ENCODE measurements at regions of chr1 and their contacts with region 1.

Region 1: DNA sequence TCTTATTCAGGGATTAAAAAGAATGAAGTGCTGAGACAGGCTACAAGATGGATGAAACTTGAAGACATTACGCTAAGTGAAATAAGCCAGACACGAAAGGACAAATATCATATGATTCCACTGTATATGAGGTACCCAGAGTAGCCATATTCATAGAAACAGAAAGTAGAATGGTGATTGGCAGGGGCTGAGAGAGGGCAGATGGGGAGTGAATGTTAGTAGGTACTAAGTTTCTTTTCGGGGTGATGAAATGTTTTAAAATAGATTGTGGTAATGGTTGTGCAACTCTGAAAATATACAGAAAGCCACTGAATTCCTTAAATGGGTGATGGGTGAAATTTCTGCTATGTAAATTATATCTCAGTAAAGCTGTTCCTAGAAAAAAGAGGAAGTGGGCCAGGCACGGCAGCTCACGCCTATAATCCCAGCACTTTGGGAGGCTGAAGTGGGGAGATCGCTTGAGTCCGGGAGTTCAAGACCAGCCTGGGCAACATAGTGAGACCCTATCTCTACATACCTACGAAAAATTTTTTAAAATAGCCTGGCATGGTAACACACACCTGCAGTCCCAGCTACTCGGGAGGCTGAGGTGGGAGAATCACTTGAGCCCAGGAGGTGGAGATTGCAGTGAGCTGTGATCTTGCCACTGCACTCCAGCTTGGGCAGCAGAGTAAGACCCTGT is 15.9 kb downstream of the SLC27A3 start:
- DNase-seq: peak; percentile 86
- ATAC-seq: peak; percentile 94
- H3K4me3 ChIP-seq: peak overlapping the region in 4 of 5 experiments; percentile 11 to 59 (median 44)
- H3K4me3 Mint-ChIP-seq: peak overlapping the region; percentile 59
- H3K27ac ChIP-seq: peak overlapping the region; percentile 91 to 92
- H3K27ac Mint-ChIP-seq: peak overlapping the region; percentile 95
- H3K4me1 ChIP-seq: peaks cover 28 to 34% of the 10 kb centered on the region in 2 donors
- H3K4me1 Mint-ChIP-seq: peaks cover 36% of the 10 kb centered on the region
- H3K27me3 ChIP-seq: no peaks in the 10 kb centered on the region
- H3K27me3 Mint-ChIP-seq: no peaks in the 10 kb centered on the region
- CTCF ChIP-seq: no peak

Region 2: DNA sequence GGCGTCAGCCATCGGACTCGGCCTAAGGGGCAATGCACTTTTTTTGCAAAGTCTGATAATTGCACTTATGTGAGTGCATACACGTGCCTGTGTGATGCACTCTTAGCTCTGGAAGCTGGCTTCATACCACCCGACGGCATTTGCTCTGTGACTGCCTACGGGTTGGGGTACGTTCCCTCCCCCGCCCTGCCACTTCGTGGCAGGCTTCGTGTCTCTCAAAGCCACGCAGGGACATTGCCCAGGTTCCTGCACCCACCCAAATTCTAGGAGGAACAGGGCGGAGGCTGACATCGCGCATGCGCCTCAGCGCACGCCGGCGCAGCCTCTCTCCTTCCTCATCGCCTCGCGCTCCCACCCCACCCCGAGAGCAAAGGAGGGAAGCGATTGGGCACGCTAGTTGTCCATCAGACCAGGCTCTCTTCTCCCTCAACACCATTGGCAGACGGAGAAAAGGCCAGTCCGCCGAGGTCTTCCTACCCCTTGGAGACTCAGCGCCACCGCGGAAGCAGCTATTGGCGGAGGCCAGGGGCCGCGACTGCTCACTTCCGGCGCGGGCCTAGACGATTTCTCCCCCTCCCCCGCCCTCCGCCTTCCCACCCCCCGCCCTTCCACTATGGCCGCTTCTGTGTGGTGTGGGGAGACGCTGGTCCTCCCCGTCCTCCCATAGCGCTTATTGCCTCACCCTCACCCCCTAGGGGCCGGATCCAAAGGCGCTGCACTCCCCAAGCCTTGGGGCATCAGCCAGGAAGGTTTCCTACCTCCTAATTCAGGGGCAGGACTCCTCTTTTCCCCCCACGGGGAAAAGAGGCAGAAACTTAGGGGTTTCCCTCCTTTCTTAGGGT is 63.4 kb before region 1 on chr1 and contains the start of gene INTS3:
- CTCF ChIA-PET with region 1: no interaction called
- POLR2A ChIA-PET with region 1: no interaction called
- intact Hi-C with region 1: loop called (anchors 5 kb)
- DNase-seq: peak; percentile 99
- ATAC-seq: peak; percentile 99
- H3K4me3 ChIP-seq: peak within 1 kb of the TSS; percentile 78 to 99 (median 91)
- H3K4me3 Mint-ChIP-seq: peak within 1 kb of the TSS; percentile 84
- H3K27ac ChIP-seq: peak within 1 kb of the TSS; percentile 97 to 98
- H3K27ac Mint-ChIP-seq: peak within 1 kb of the TSS; percentile 86
- H3K4me1 ChIP-seq: peaks cover 9 to 16% of the 10 kb centered on the region in 2 donors
- H3K4me1 Mint-ChIP-seq: peaks cover 36% of the 10 kb centered on the region
- H3K27me3 ChIP-seq: no peaks in the 10 kb centered on the region
- H3K27me3 Mint-ChIP-seq: no peaks in the 10 kb centered on the region
- CTCF ChIP-seq: no peak
- total RNA-seq, gene INTS3: 69.1 and 69.3 TPM in 2 replicates

Region 3: DNA sequence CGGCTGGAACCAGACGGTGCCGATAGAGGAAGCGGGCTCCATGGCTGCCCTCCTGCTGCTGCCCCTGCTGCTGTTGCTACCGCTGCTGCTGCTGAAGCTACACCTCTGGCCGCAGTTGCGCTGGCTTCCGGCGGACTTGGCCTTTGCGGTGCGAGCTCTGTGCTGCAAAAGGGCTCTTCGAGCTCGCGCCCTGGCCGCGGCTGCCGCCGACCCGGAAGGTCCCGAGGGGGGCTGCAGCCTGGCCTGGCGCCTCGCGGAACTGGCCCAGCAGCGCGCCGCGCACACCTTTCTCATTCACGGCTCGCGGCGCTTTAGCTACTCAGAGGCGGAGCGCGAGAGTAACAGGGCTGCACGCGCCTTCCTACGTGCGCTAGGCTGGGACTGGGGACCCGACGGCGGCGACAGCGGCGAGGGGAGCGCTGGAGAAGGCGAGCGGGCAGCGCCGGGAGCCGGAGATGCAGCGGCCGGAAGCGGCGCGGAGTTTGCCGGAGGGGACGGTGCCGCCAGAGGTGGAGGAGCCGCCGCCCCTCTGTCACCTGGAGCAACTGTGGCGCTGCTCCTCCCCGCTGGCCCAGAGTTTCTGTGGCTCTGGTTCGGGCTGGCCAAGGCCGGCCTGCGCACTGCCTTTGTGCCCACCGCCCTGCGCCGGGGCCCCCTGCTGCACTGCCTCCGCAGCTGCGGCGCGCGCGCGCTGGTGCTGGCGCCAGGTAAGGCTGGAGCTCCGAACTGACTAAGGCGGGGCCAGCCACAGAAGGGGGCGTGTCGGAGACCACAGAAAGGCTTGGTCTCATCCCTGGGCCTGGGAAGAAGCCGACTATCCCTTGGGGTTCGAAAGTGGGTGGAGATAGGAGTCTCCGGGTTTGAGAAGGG is 15.4 kb before region 1 on chr1:
- CTCF ChIA-PET with region 1: no interaction called
- POLR2A ChIA-PET with region 1: interaction called, 7 read pairs
- intact Hi-C with region 1: loop called (anchors 2 kb)
- DNase-seq: peak; percentile 77
- ATAC-seq: peak; percentile 68
- H3K4me3 ChIP-seq: peak overlapping the region; percentile 49 to 80 (median 71)
- H3K4me3 Mint-ChIP-seq: peak overlapping the region; percentile 91
- H3K27ac ChIP-seq: peak overlapping the region; percentile 34 to 48
- H3K27ac Mint-ChIP-seq: peak overlapping the region; percentile 84
- H3K4me1 ChIP-seq: peaks cover 22 to 35% of the 10 kb centered on the region in 2 donors
- H3K4me1 Mint-ChIP-seq: peaks cover 31% of the 10 kb centered on the region
- H3K27me3 ChIP-seq: no peaks in the 10 kb centered on the region
- H3K27me3 Mint-ChIP-seq: no peaks in the 10 kb centered on the region
- CTCF ChIP-seq: no peak

Region 4: DNA sequence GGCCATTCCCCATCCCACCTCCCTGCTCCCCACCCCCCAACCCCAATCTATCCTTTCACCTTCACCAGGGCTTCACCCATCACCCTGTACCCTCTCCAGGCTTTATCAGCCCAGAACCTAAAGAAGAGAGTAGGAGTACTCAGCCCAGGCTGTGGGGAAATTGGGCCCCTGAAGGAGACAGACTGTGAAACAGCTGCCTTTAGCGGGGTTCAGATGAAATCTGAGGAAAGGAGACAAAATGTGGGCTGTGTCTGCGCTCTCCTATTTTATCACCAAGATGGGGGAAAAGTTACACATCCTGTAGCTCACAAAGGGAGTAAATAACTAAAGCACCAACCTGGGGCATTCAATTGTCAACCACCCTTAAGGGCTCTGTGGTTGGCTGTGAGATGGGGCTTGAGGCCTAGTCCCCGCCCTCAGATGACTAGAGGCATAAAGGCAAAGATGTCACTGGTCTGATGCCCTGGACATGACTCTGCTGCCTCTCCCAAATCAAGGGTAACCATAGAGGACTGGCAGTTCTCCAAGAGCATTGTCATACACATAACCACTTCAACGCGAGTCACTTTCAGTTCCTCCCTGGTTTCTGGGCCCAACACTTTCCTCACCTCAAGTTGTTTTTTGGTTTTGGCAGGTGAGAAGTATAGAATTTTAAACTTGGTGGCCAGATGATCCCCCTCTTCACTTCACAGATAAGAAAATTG is 14.1 kb after region 1 on chr1:
- CTCF ChIA-PET with region 1: no interaction called
- POLR2A ChIA-PET with region 1: no interaction called
- intact Hi-C with region 1: loop called (anchors 2 kb)
- DNase-seq: peak; percentile 91
- ATAC-seq: peak; percentile 98
- H3K4me3 ChIP-seq: no peak overlapping the region
- H3K4me3 Mint-ChIP-seq: peak overlapping the region; percentile 21
- H3K27ac ChIP-seq: peak overlapping the region; percentile 82 to 88
- H3K27ac Mint-ChIP-seq: peak overlapping the region; percentile 81
- H3K4me1 ChIP-seq: peaks cover 22 to 33% of the 10 kb centered on the region in 2 donors
- H3K4me1 Mint-ChIP-seq: peaks cover 30% of the 10 kb centered on the region
- H3K27me3 ChIP-seq: no peaks in the 10 kb centered on the region
- H3K27me3 Mint-ChIP-seq: no peaks in the 10 kb centered on the region
- CTCF ChIP-seq: no peak

Measured in B cell (primary cell).